HCT116 (cell line): ENCODE measurements at regions of chr20 and their contacts with region 1.

Region 1: GRCh38 chr20:11178946-11179654 is 505.3 kb upstream of the JAG1 start:
- DNase-seq: peak; percentile 88
- ATAC-seq: peak; percentile 99
- H3K4me3 ChIP-seq: peak overlapping the region in 1 of 2 experiments; percentile 25; a peak in 2 of 4 replicates
- H3K27ac ChIP-seq: peak overlapping the region; percentile 20; the same call in 1 of the 2 replicates
- H3K4me1 ChIP-seq: peaks cover 3 to 12% of the 10 kb centered on the region in 2 experiments; a peak in 3 of 4 replicates
- H3K27me3 ChIP-seq: no peaks in the 10 kb centered on the region
- CTCF ChIP-seq: peak in 2 of 3 experiments; percentile 49 to 52; a peak in 4 of 6 replicates
- POLR2A ChIP-seq: no peak
- RAD21 ChIP-seq: no peak

Region 2: DNA sequence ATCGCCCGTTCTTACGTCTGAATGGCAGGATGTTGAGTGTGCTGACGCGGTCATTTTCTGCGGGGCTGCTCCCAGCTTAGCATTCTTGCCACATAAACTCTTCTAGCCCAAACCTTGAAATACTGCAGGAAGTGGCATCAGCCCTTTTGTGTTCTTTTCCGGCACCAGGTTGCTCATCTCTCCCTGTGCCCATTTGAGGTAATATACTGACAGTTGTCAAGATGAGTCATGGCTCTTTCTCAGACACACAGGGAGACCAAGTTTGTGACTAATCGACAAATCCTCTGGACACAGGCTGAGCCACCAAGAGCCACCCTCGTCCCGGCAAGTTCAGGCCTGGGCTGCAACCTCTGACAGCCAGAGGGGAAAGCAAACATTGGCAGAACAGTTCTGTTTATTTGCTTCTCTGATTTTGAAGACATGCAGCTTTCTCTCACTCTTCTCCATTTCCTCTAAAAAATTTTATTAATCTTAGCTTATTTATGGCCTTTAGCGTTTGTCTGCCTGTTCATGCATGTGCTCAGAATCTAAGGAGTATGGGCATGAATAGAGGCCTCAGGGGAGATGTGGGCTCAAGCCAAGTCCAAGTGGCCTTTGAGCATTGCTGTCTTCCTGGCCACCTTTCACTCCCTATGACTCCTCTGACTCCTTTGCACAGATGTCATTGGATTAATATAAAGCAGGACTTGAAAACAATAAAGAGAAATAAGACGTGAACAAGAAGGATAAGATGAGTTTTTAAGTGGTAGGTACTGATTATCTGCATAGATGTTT is 177.1 kb before region 1 on chr20:
- CTCF ChIA-PET with region 1: no interaction called
- POLR2A ChIA-PET with region 1: no interaction called
- RAD21 ChIA-PET with region 1: no interaction called
- intact Hi-C with region 1: loop called (anchors 10 kb)
- DNase-seq: peak; percentile 95
- ATAC-seq: peak; percentile 97
- H3K4me3 ChIP-seq: peak overlapping the region; percentile 12 to 32
- H3K27ac ChIP-seq: peak overlapping the region; percentile 49
- H3K4me1 ChIP-seq: peaks cover 13 to 24% of the 10 kb centered on the region in 2 experiments
- H3K27me3 ChIP-seq: no peaks in the 10 kb centered on the region
- CTCF ChIP-seq: no peak
- POLR2A ChIP-seq: no peak
- RAD21 ChIP-seq: peak; percentile 33; the same call in 1 of the 2 replicates

Region 3: DNA sequence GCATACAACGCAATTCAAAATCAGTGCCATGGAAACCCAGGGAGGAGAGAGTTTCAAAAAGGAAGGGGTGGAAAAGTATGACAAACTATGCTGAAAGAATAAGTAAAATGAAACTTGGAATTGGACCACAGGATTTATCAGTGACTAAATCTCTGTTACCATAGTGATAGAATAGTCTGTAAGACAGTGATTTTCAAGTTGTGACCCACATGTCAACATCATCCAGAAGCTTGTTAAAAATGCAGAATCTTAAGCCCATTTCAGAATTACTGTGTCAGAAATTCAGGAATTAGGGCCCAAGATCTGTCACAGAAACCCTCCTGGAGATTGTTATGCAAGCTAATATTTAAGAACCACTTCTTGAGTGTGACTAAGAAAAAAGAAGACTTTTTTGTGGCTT is 87.6 kb before region 1 on chr20:
- CTCF ChIA-PET with region 1: no interaction called
- POLR2A ChIA-PET with region 1: no interaction called
- RAD21 ChIA-PET with region 1: no interaction called
- intact Hi-C with region 1: no loop called
- DNase-seq: no peak
- ATAC-seq: no peak
- H3K4me3 ChIP-seq: no peak overlapping the region
- H3K27ac ChIP-seq: no peak overlapping the region
- H3K4me1 ChIP-seq: no peaks in the 10 kb centered on the region
- H3K27me3 ChIP-seq: no peaks in the 10 kb centered on the region
- CTCF ChIP-seq: no peak
- POLR2A ChIP-seq: no peak
- RAD21 ChIP-seq: no peak

Region 4: DNA sequence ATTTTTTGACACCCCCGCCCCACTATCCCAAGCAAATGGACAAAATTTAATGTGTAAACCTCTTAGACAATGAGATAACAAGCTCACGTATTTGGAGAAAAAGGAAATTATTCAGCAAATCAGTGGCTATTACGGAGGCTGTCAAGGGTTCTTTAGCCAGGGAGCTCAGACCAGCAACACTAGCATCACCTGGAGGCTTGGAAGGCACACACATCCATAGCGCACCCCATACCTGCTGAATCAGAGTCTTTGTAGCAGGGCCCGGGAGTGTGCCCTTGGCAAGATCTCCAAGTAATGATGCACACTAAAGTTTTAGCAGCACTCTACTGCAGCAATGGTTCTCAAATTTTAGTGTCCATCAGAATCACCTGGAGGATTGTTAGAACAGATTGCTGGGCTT is 515.4 kb after region 1 on chr20:
- CTCF ChIA-PET with region 1: no interaction called
- POLR2A ChIA-PET with region 1: no interaction called
- RAD21 ChIA-PET with region 1: no interaction called
- intact Hi-C with region 1: no loop called
- DNase-seq: no peak
- ATAC-seq: no peak
- H3K4me3 ChIP-seq: no peak overlapping the region
- H3K27ac ChIP-seq: no peak overlapping the region
- H3K4me1 ChIP-seq: no peaks in the 10 kb centered on the region
- H3K27me3 ChIP-seq: no peaks in the 10 kb centered on the region
- CTCF ChIP-seq: no peak
- POLR2A ChIP-seq: no peak
- RAD21 ChIP-seq: no peak